PC-3 (cell line): ENCODE measurements at regions of chr2 and their contacts with region 1.

Region 1: DNA sequence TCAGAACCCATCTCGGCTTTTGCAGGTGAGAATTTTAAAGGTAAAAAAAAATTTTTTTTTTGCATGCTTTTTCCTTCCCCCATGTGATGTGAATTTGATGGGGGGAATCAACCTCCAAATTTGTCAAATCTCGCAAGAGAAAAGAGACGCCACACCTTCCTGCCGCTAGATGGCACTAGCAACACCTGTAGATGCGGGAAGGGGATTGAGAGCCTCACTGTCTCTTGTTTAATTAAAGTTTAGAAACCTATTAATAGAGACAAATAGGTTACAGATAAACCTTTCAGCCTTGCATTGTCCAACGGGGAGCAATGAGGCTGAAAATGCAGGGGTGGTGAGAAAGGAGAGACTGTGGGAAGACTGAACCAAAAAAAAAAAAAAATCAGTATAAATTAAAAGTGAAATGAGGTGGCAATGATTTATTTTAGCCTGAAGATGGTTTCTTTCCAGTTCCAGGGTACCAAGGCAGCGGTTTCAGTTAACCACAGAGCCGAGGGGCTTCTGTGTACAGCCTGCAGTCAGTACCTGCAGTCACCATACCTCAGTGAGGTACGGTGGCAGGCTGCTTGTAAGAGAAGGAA is 84.6 kb downstream of the NRP2 start:
- DNase-seq: peak; percentile 73
- ATAC-seq: no peak
- H3K4me3 ChIP-seq: no peak overlapping the region
- H3K27ac ChIP-seq: no peak overlapping the region
- H3K4me1 ChIP-seq: peaks cover 18% of the 10 kb centered on the region
- H3K27me3 ChIP-seq: no peaks in the 10 kb centered on the region
- CTCF ChIP-seq: peak; percentile 93

Region 2: DNA sequence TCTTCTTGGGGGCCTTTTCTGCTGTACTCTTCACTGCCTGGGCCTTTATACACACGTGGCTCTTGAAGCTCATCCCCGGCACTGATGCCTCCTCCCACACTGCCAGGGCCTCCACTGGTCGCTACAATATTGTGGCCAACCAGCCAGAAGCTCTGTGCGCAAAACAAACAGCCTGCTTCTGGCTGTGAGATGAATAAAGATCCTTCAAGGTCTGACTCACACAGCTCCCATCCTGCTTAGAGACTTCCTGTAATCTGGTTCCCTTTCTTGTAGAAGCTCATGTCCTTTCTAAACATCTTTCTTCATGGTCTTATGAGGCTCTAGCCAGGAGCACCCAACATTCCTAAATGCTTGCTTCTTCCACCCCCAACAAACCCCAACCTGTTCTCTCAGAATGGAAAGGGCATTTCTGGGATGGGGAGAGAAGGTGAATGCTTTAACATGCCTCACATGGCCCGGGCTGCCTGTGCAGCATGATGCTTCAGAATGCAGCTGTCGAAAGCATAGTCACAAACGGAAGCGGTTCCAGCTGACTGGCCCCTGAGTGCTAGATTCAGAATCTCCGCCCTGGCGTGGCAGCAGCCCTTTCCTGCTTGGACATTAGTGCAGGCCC is 60.0 kb before region 1 on chr2:
- CTCF ChIA-PET with region 1: no interaction called
- POLR2A ChIA-PET with region 1: no interaction called
- intact Hi-C with region 1: loop called (anchors 1 kb)
- DNase-seq: peak; percentile 69
- ATAC-seq: peak; percentile 96
- H3K4me3 ChIP-seq: no peak overlapping the region
- H3K27ac ChIP-seq: peak overlapping the region; percentile 68
- H3K4me1 ChIP-seq: peaks cover 25% of the 10 kb centered on the region
- H3K27me3 ChIP-seq: no peaks in the 10 kb centered on the region
- CTCF ChIP-seq: no peak

Region 3: GRCh38 chr2:205808486-205809121 is 41.7 kb after region 1 on chr2:
- CTCF ChIA-PET with region 1: no interaction called
- POLR2A ChIA-PET with region 1: no interaction called
- intact Hi-C with region 1: loop called (anchors 1 kb)
- DNase-seq: no peak
- ATAC-seq: no peak
- H3K4me3 ChIP-seq: no peak overlapping the region
- H3K27ac ChIP-seq: no peak overlapping the region
- H3K4me1 ChIP-seq: no peaks in the 10 kb centered on the region
- H3K27me3 ChIP-seq: no peaks in the 10 kb centered on the region
- CTCF ChIP-seq: no peak

Region 4: DNA sequence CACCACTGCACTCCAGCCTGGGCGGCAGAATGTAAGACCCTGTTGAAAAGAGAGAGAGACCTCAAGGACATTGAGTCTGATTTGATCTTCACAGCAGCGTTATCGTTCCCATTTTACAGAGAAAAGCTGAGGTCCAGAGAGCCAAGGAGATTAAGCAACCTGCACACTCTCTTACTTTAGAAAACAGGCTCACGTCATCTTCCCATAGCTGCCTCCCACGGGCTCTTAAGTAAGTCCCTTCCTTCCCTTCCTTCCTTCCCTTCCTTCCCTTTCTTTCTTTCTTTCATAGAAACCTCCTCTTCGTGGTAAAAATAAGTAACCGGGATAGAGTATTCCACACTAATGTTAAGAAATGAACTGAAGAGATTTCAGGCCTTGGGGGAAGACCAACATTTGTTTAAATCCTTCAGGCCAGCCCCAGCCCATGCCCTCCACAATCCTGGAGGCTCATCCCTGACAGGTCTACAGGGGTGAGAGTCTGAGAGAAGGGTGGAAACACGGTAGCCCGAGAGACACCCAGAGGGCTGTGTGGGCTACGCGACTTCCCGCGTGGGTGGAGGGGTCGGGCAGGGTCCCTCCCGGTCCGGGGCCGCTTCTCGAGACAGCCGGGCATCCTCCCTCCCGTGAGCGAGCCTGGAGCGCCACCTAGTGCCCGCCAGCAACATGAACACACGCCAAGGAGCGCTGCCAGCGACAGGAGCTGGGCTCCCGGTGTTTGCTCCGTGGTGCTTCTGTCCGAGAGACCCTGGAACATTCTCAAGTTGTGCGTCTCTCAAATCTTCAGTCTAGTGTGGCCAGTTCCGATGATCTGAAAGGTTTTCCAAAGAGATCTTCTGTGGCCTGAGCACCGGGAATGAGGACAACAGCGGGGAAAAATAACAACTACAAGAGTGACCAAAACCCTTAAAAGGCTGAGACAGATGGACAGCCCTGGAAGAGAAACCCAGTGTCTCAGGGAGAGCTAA is 158.8 kb after region 1 on chr2:
- CTCF ChIA-PET with region 1: no interaction called
- POLR2A ChIA-PET with region 1: no interaction called
- intact Hi-C with region 1: loop called (anchors 2 kb)
- DNase-seq: peak; percentile 75
- ATAC-seq: peak; percentile 97
- H3K4me3 ChIP-seq: peak overlapping the region; percentile 60
- H3K27ac ChIP-seq: no peak overlapping the region
- H3K4me1 ChIP-seq: 0 out of 2 replicates have a peak, but pooled peaks cover 4% of the 10 kb centered on the region
- H3K27me3 ChIP-seq: peaks cover 77% of the 10 kb centered on the region
- CTCF ChIP-seq: peak; percentile 97